ENCODE measurements at regions of chr6 and their contacts with region 1.

Region 1: GRCh38 chr6:109073344-109074132 is 21.1 kb downstream of the SESN1 start:
- DNase-seq: no peak
- ATAC-seq: no peak
- H3K4me3 Mint-ChIP-seq: no peak overlapping the region
- H3K27ac Mint-ChIP-seq: no peak overlapping the region
- H3K4me1 Mint-ChIP-seq: peaks cover 5% of the 10 kb centered on the region
- H3K27me3 Mint-ChIP-seq: no peaks in the 10 kb centered on the region
- CTCF ChIP-seq: peak; percentile 89

Region 2: GRCh38 chr6:108541838-108542759 is 531.4 kb before region 1 on chr6:
- CTCF ChIA-PET with region 1: interaction called, 131 read pairs
- POLR2A ChIA-PET with region 1: no interaction called
- intact Hi-C with region 1: loop called (anchors 1 kb)
- DNase-seq: peak; percentile 34
- ATAC-seq: peak; percentile 84
- H3K4me3 Mint-ChIP-seq: peak overlapping the region; percentile 41
- H3K27ac Mint-ChIP-seq: no peak overlapping the region
- H3K4me1 Mint-ChIP-seq: peaks cover 15% of the 10 kb centered on the region
- H3K27me3 Mint-ChIP-seq: peaks cover 7% of the 10 kb centered on the region
- CTCF ChIP-seq: peak; percentile 39

Region 3: GRCh38 chr6:108782179-108783041 is 291.1 kb before region 1 on chr6:
- CTCF ChIA-PET with region 1: interaction called, 3 read pairs
- POLR2A ChIA-PET with region 1: no interaction called
- intact Hi-C with region 1: loop called (anchors 1 kb)
- DNase-seq: peak; percentile 52
- ATAC-seq: peak; percentile 94
- H3K4me3 Mint-ChIP-seq: peak overlapping the region; percentile 81
- H3K27ac Mint-ChIP-seq: no peak overlapping the region
- H3K4me1 Mint-ChIP-seq: peaks cover 29% of the 10 kb centered on the region
- H3K27me3 Mint-ChIP-seq: peaks cover 17% of the 10 kb centered on the region
- CTCF ChIP-seq: peak; percentile 27

Region 4: GRCh38 chr6:108848116-108848868 is 225.2 kb before region 1 on chr6 and contains the start of gene ARMC2:
- CTCF ChIA-PET with region 1: interaction called, 11 read pairs
- POLR2A ChIA-PET with region 1: no interaction called
- intact Hi-C with region 1: no loop called
- DNase-seq: peak; percentile 98
- ATAC-seq: peak; percentile 94
- H3K4me3 Mint-ChIP-seq: peak within 1 kb of the TSS; percentile 86
- H3K27ac Mint-ChIP-seq: peak within 1 kb of the TSS; percentile 83
- H3K4me1 Mint-ChIP-seq: peaks cover 14% of the 10 kb centered on the region
- H3K27me3 Mint-ChIP-seq: peaks cover under 1% of the 10 kb centered on the region
- CTCF ChIP-seq: no peak
- total RNA-seq, gene ARMC2: 3.5 and 4.3 TPM in 2 replicates

Region 5: DNA sequence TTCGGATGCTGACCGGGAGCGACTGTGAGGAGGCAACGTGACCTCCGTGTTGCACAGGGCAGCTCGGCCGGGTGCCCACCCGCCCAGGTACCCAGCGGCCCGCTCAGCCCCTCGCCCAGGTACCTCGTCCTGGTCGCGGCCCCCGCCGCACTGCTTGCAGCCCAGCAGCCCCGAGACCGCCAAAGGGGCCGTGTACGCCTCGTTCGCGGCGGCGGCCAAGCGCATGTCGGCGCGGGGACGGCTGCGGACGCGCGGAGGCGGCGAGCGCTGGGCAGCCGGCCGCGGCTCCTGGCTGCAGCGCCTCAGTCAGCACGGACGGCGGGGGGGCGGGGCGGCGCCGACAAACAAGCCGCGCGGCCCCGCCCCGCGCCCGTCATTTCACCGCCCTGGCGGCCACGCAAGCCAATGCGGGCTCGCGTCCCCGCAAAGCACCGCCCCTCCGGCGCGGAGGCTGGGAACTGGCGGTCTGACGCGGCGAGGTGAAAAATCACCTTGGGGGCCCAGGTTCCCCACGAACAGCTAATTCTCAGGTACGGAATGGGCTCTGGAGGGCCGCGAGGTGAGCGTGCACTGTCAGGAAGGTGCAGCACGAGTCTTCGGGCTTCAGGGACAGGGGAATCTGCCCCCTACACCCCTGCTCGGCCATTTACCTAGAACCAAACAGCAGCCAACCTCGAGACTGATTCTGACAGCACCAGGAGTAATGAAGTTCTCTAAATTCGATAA is 64.1 kb before region 1 on chr6:
- CTCF ChIA-PET with region 1: interaction called, 4 read pairs
- POLR2A ChIA-PET with region 1: no interaction called
- intact Hi-C with region 1: loop called (anchors 5 kb)
- DNase-seq: peak; percentile 87
- ATAC-seq: peak; percentile 97
- H3K4me3 Mint-ChIP-seq: peak overlapping the region; percentile 97
- H3K27ac Mint-ChIP-seq: peak overlapping the region; percentile 95
- H3K4me1 Mint-ChIP-seq: peaks cover 65% of the 10 kb centered on the region
- H3K27me3 Mint-ChIP-seq: no peaks in the 10 kb centered on the region
- CTCF ChIP-seq: no peak

Measured in activated B cell treated with CpG ODN at 0.5 μM for 24 hours (primary cell).